ENCODE measurements at regions of chr3 and their contacts with region 1.

Region 1: DNA sequence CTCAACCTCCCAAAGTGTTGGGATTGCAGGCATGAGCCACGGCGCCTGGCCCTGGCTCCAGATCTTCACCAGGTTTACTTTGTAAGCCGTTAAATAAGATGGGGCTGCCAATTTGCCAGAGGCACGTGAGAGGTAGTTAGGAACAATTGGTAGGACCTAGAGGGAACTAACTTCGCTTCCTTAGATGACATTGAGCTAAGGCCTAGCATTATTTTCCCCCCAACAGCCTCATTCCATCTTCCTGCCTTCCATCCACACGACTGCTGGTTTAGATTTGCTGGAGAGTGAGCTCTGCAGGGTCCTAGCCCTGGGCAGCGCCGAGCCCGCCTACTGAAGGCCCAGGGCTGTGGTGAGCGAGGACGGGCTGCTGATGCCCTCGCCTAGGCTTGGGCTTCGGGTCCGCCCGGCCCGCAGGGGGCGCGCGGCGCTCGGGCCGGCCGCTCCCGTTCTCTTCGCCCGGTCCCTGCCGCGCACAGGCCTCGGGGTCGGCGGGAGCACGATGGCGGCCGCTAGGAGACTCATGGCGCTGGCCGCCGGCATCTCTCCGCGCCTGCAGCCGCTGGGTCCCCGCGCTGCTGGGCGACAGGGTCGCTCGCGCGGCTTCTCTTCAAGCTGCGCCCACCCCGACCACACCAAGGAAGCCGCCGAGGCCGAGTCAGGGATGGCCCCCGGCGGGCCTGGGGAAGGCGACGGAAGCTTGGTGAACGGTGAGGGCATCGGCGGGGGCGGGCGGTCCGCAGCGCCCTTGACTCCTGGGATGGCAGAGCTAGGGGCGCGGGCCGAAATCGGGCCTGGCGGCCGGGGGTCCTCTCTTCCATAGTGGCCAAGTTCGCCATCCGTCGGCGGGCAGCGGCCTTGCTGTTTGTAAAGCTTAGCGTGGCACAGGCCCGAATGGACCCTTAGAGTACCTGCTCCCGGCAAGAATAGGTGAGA is 21.9 kb downstream of the DHX30 start:
- DNase-seq: no peak
- H3K4me3 ChIP-seq: peak overlapping the region; percentile 81 to 89 (median 86)
- H3K27ac ChIP-seq: peak overlapping the region; percentile 72 to 90 (median 84)
- H3K4me1 ChIP-seq: peaks cover 8 to 30% (median 19%) of the 10 kb centered on the region in 3 donors
- H3K27me3 ChIP-seq: no peaks in the 10 kb centered on the region
- CTCF ChIP-seq: peak; percentile 75 to 88 (median 82)
- POLR2A ChIP-seq: peak in 1 of 4 donors; percentile 13

Region 2: DNA sequence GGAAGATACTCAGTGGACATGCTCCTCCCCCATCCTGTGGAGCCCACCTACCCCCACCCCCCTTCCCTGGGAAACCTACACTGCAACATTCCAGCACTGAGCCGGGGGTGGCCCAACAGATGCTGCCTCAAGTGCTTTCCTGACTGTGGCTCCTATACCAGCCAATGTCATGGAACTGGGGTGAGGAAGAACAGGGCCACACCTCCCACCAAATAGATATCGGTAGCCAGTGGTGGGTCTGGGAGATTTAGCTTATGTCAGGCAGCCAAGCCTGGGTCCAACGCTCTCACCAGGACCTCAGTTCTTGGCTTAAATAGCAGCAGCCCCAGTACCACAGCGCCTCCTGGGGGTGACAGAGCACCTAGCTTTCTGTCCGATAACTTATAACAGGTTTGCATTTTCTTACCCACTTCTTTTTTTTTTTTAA is 333.2 kb after region 1 on chr3:
- intact Hi-C with region 1: loop called (anchors 5 kb)
- DNase-seq: no peak
- H3K4me3 ChIP-seq: no peak overlapping the region
- H3K27ac ChIP-seq: no peak overlapping the region
- H3K4me1 ChIP-seq: peaks cover 0 to 14% (median 0%) of the 10 kb centered on the region in 3 donors
- H3K27me3 ChIP-seq: no peaks in the 10 kb centered on the region
- CTCF ChIP-seq: peak; percentile 31 to 66 (median 46)
- POLR2A ChIP-seq: no peak